Gastrocnemius medialis (tissue), 4 donors: ENCODE measurements at regions of chr3 and their contacts with region 1.

Region 1: DNA sequence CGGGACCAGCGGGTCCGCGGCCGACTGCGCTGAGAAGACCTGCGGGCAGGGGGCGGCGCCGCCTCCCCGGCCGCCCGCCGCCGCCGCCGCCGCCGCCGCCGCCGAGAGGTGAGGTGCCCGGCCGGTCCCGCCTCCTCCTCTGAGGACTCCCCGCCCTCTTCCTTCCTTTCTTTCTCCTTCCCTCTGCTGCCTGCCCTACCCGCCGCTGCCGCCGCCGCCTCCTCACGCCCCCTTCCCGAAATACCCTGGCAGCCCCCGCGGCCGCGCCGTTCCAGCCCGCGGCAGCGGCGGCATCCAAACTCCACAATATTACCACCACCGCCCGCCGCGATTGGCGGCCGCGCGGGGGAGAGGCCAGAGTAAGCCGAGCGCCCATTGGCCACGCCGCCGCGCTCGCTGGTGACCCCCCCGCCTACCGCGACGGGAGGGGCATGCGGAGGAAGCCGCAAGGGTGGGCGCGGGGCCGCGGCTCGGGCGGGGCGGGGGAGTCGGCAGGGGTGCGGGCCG is 61.8 kb upstream of the ANKRD28 start:
- DNase-seq: peak; percentile 80 to 90
- ATAC-seq: peak; percentile 86 to 87
- H3K4me3 ChIP-seq: peak overlapping the region; percentile 72 to 92 (median 84)
- H3K27ac ChIP-seq: peak overlapping the region; percentile 88 to 97 (median 93)
- H3K4me1 ChIP-seq: peaks cover 31 to 33% of the 10 kb centered on the region in 2 donors
- H3K27me3 ChIP-seq: no peaks in the 10 kb centered on the region
- CTCF ChIP-seq: peak in 1 of 5 experiments; percentile 21
- POLR2A ChIP-seq: peak; percentile 79 to 90

Region 2: GRCh38 chr3:15629860-15630597 is 229.5 kb before region 1 on chr3:
- in situ Hi-C with region 1: no loop called
- intact Hi-C with region 1: loop called (anchors 5 kb)
- DNase-seq: peak; percentile 69 to 76
- ATAC-seq: peak; percentile 91 to 93
- H3K4me3 ChIP-seq: peak overlapping the region; percentile 24 to 50 (median 37)
- H3K27ac ChIP-seq: peak overlapping the region; percentile 77 to 90 (median 84)
- H3K4me1 ChIP-seq: peaks cover 25 to 27% of the 10 kb centered on the region in 2 donors
- H3K27me3 ChIP-seq: no peaks in the 10 kb centered on the region
- CTCF ChIP-seq: peak; percentile 77 to 85 (median 78)
- POLR2A ChIP-seq: no peak

Region 3: DNA sequence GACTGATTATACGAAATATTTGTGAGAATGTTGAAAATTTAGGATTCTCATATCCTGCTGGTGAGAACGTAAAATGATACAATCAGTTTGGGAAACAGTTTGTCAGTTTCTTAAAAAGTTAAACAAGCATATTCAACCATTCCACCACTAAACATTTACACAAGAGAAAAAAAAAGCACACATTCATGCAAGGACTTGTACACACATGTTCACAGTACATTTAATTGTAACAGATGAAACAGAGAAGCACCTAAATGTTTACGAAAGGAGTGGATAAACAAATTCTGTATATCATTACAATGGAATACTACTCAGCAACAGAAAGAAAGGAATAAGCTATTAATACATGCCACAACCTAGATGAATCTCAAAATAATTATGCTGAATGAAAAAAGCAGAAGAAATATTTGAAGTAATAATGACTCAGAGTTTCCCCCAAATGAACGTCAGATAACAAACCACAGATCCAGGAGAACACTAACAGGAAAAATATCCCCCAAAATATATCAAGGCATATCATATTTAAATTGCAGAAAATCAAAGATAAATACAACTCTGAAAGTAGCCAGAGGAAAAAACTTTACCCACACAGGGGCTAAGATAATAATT is 76.1 kb before region 1 on chr3:
- in situ Hi-C with region 1: no loop called
- intact Hi-C with region 1: no loop called
- DNase-seq: no peak
- ATAC-seq: no peak
- H3K4me3 ChIP-seq: peak overlapping the region in 3 of 4 donors; percentile 3 to 43 (median 24)
- H3K27ac ChIP-seq: peak overlapping the region; percentile 55 to 83 (median 76)
- H3K4me1 ChIP-seq: peaks cover 41 to 52% of the 10 kb centered on the region in 2 donors
- H3K27me3 ChIP-seq: no peaks in the 10 kb centered on the region
- CTCF ChIP-seq: no peak
- POLR2A ChIP-seq: no peak

Region 4: GRCh38 chr3:15903164-15903563 is 43.6 kb after region 1 on chr3:
- in situ Hi-C with region 1: no loop called
- intact Hi-C with region 1: loop called (anchors 2 kb)
- DNase-seq: peak; percentile 80 to 87
- ATAC-seq: peak; percentile 84 to 91
- H3K4me3 ChIP-seq: no peak overlapping the region
- H3K27ac ChIP-seq: peak overlapping the region; percentile 81 to 95 (median 87)
- H3K4me1 ChIP-seq: peaks cover 22 to 31% of the 10 kb centered on the region in 2 donors
- H3K27me3 ChIP-seq: no peaks in the 10 kb centered on the region
- CTCF ChIP-seq: no peak
- POLR2A ChIP-seq: peak in 1 of 2 donors; percentile 21

Region 5: DNA sequence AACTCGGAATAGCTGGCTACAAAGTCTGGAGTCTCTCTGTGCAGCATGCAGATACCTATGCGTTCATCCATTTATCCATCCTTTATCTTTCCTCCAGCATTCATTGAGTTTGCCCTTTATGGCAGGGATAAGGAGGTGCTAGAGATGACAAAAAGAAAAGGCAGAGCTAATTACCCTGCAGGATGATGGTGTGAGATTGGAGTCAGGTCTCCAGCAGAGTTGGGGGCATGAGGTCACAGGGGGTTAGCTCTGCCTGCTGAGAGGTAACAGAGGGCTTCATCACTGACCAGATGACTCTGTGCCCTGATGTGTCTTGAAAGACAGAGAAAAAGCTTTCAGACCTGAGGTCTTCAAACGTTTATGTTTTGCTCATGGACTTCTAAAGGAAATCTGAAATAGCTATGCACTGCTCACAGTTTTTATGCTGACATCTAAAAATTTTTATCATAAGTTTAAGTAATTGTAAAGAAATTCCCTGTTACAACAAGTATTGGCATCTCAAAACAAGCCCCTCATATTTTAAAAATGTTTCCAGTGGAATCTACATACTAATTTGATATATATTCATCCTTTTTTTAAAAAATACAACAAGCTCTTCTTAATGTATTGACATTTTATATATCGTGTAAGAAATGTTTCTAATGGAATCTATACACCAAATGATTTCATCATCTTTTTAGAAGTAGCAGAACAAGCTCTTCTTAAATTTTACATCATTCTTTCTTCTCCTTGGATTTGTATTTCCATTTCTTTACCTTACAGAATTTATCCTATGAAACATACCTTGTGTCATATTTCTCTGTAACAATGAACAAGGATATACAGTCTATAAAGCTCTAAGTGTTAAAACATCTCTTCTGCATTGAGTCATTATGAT is 70.6 kb after region 1 on chr3:
- in situ Hi-C with region 1: no loop called
- intact Hi-C with region 1: loop called (anchors 2 kb)
- DNase-seq: no peak
- ATAC-seq: no peak
- H3K4me3 ChIP-seq: no peak overlapping the region
- H3K27ac ChIP-seq: no peak overlapping the region
- H3K4me1 ChIP-seq: peaks cover 9 to 16% of the 10 kb centered on the region in 2 donors
- H3K27me3 ChIP-seq: no peaks in the 10 kb centered on the region
- CTCF ChIP-seq: no peak
- POLR2A ChIP-seq: no peak

Region 6: DNA sequence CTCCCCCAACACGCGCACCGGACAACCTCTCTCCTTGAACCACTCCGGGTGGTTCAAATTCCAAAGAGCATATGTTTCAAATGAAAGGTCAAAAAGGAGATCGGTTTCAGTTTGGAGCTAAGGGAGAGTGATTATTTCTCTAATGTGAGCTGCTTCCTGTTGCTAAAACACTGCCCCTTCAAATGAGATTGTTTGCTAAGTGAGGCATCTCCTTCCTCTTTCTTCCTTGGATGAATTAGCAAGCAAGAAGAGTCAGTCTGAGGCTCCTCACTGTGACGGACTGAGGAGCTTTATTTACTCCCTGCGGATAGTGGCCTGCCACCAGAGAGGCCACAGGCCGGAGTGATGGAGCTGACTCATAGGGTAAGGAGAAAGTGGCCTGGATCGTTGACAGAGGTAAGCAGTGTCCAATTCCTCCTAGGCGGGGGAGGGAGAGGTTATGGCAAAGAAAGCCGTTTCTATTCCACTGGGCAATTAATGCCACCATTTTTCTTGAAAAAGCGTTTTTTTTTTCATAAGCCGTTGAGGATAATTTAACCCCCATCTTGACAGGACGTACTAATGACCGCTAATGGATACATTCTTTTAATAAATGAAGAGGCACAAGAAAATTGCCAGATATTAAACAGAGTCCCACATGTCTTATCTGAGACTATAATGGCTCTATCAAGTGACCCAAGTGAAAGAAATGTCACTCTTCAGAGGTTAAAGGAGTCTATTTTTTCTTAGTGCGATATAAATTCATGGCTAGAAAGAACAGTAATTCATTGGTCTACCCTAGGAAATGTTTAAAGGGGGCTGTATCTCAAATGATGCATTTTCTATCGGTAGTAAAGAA is 105.3 kb after region 1 on chr3:
- in situ Hi-C with region 1: no loop called
- intact Hi-C with region 1: loop called (anchors 1 kb)
- DNase-seq: peak; percentile 88 to 93
- ATAC-seq: peak; percentile 97 to 99
- H3K4me3 ChIP-seq: peak overlapping the region; percentile 14 to 41 (median 26)
- H3K27ac ChIP-seq: peak overlapping the region; percentile 85 to 93 (median 90)
- H3K4me1 ChIP-seq: peaks cover 21% of the 10 kb centered on the region in 2 donors
- H3K27me3 ChIP-seq: no peaks in the 10 kb centered on the region
- CTCF ChIP-seq: no peak
- POLR2A ChIP-seq: peak; percentile 64 to 83